ENCODE measurements at regions of chr17 and their contacts with region 1.

Region 1: DNA sequence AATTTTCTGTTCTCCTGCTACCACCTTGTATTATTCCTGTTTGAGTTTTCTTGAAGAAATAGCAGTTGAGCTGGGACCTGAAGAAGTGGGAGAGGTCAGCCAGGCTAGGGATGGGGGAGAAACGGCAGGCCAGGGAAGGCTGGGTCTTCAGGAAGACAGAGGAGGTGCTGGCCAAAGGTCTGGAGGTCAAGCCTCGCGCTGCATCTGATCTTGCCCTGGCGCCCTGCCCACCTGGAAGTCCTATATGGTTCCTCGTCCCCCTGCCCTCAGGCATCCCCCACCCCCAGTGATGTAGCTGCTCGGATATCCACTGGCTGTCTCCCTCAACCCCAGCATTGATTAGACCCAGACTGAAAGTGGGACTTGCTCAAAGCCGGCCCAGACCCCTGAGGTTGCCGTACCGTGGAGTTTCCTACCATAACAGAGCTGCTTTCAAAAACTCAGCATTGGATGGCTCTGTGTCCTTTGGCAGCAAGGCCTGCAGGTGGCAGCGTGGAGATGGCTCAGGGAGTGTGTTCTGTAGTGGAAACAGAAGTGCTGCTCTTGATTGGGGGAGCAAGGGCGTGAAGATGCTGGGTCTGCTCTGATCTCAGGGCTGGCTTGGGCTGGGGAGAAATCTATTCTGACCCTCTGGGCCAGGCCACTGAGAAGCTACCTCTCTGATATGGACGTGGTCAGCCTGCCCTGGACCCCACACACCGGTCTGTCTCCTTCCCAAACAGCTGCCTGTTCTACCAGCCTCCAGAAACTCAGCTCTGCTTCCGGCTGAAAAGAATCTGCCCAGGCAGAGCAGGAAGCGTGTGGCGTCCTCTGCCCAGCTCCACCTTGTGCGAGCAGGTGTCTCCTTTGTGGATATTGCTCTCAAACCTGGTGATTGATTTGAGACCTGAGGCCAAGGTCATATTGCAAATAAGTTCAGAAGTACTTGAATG is 107.0 kb upstream of the CACNG5 start:
- DNase-seq: peak; percentile 79
- ATAC-seq: peak; percentile 83
- H3K4me3 Mint-ChIP-seq: no peak overlapping the region
- H3K27ac Mint-ChIP-seq: peak overlapping the region; percentile 49
- H3K4me1 Mint-ChIP-seq: peaks cover 67% of the 10 kb centered on the region
- H3K27me3 Mint-ChIP-seq: no peaks in the 10 kb centered on the region
- CTCF ChIP-seq: peak; percentile 36; the same call in 1 of the 2 replicates

Region 2: GRCh38 chr17:66829386-66829864 is 101.5 kb after region 1 on chr17:
- CTCF ChIA-PET with region 1: interaction called, 13 read pairs
- POLR2A ChIA-PET with region 1: no interaction called
- DNase-seq: peak; percentile 74
- ATAC-seq: peak; percentile 94
- H3K4me3 Mint-ChIP-seq: no peak overlapping the region
- H3K27ac Mint-ChIP-seq: no peak overlapping the region; the same call in 1 of the 2 replicates
- H3K4me1 Mint-ChIP-seq: peaks cover 29% of the 10 kb centered on the region
- H3K27me3 Mint-ChIP-seq: peaks cover 14% of the 10 kb centered on the region
- CTCF ChIP-seq: no peak

Region 3: DNA sequence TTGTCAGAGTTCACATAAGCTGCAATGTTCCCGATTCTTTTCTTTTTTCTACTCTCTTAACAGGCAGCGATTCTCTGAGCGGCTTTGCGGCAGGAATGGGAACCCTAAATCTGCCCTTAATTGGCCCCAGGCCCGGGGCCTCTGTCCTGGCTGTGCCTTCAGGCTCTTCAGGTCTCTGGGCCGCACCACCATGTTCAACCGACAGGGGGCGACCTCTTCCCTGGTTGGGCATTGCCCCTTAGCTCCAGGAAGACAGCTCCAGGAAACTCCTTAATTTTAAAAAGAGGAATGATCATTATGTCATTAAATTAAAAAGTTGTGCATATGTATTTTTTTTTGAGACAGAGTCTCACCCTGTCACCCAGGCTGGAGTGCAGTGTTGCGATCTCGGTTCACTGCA is 127.3 kb after region 1 on chr17:
- CTCF ChIA-PET with region 1: interaction called, 12 read pairs
- POLR2A ChIA-PET with region 1: no interaction called
- DNase-seq: peak; percentile 90
- ATAC-seq: peak; percentile 72
- H3K4me3 Mint-ChIP-seq: no peak overlapping the region
- H3K27ac Mint-ChIP-seq: no peak overlapping the region
- H3K4me1 Mint-ChIP-seq: peaks cover 8% of the 10 kb centered on the region; the same call in 1 of the 2 replicates
- H3K27me3 Mint-ChIP-seq: peaks cover 2% of the 10 kb centered on the region; the same call in 1 of the 2 replicates
- CTCF ChIP-seq: peak; percentile 90

Region 4: DNA sequence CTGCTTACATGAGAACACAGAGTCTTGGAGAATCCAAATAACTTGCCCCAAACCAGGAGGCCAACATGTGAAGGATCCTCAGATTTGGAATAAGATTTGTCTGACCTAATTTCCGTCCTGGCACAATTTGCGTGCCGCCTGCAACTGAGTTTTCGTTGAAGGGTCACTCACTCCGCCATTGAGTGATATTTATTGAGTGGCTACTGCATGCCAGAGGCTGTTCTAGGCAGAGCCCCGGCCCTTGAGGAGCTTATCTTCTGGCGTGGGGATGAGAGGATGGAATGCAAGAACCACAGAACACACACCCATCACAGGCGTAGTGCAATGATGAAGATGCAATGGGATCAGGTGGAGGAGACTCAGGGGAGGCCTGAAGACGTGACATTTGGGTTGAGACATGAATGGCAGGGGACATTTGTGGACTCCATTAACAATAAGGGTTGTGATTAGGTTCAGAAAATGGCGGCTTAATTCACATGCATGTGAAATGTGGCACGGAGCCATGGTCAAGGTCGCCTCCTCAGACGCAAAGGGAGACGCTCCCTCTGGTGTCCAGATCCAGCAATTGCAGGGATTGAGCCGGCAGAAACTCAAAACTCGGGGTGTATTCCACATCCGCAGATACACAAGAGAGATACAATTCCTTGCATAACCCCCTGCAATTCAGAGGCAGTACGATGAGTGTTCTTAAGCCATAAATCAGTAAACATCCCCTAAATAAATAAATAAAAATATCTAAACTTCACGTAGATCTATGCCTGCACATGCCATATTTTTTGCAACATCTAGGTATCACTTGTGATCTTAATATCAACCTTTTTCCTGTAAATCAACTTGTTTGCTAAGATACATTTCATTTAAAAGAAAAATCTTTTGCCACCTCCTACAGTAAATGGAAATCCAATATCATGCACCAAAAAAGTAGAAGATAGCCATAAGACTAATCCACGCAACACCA is 178.7 kb after region 1 on chr17:
- CTCF ChIA-PET with region 1: interaction called, 18 read pairs
- POLR2A ChIA-PET with region 1: no interaction called
- DNase-seq: peak; percentile 81
- ATAC-seq: peak; percentile 81
- H3K4me3 Mint-ChIP-seq: no peak overlapping the region
- H3K27ac Mint-ChIP-seq: no peak overlapping the region
- H3K4me1 Mint-ChIP-seq: no peaks in the 10 kb centered on the region
- H3K27me3 Mint-ChIP-seq: peaks cover 8% of the 10 kb centered on the region; the same call in 1 of the 2 replicates
- CTCF ChIP-seq: peak; percentile 86

Region 5: DNA sequence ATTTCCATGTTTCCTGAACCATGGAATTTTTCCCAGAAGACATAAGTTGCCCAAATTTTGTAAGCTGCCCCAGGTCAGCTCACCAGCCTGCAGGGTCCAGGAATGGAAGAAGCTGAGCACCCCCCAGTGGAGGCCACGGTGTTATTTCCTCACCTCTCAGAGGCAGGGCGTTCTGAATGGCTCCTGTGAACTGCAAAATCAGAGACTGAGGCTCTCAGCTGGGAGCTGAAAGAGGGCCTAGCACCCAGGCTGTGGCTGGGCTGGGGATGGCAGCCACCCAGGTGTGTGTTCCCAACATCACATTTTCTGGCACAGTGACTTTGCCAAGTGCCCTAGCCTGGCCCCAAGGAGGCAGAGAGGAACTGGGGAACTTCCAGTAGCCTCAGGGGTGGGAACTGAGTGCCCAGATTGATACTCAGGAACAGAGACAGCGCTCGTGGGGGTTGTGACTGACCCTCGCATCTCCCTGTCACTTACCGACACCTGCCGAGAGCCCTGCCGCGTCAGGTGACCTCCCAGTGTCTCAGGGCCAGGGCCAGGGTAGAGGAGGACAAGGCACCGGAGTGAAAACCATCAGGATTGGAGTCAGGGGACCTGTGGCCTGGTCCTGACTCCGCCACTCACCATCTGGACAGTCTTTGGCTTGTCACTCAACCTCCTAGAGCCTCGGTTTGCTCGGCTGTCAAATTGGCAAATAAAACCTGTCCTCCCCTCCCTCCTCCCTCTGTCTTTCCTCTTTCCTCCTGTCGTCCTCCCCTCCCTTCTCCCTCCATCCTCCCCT is 247.9 kb after region 1 on chr17:
- CTCF ChIA-PET with region 1: interaction called, 16 read pairs
- POLR2A ChIA-PET with region 1: no interaction called
- DNase-seq: peak; percentile 70
- ATAC-seq: peak; percentile 79
- H3K4me3 Mint-ChIP-seq: no peak overlapping the region
- H3K27ac Mint-ChIP-seq: no peak overlapping the region
- H3K4me1 Mint-ChIP-seq: peaks cover 13% of the 10 kb centered on the region
- H3K27me3 Mint-ChIP-seq: no peaks in the 10 kb centered on the region
- CTCF ChIP-seq: no peak